Right ventricle myocardium superior (tissue), 1 donor: ENCODE measurements at regions of chr12 and their contacts with region 1.

Region 1: GRCh38 chr12:120437754-120438494 is at the start of gene COX6A1:
- DNase-seq: peak; percentile 96
- ATAC-seq: peak; percentile 98
- total RNA-seq, gene COX6A1: 119 TPM

Region 2: GRCh38 chr12:120321382-120322202 is 116.3 kb before region 1 on chr12:
- intact Hi-C with region 1: loop called (anchors 10 kb)
- DNase-seq: no peak
- ATAC-seq: no peak